Activated CD4-positive, alpha-beta memory T cell treated with anti-CD3 and anti-CD28 coated beads for 36 hours (primary cell): ENCODE measurements at regions of chr5 and their contacts with region 1.

Region 1: GRCh38 chr5:43631182-43631910 is 28.4 kb downstream of the NNT start:
- DNase-seq: peak; percentile 27
- H3K4me3 Mint-ChIP-seq: no peak overlapping the region
- H3K27ac Mint-ChIP-seq: no peak overlapping the region
- H3K4me1 Mint-ChIP-seq: peaks cover 5% of the 10 kb centered on the region
- H3K27me3 Mint-ChIP-seq: no peaks in the 10 kb centered on the region

Region 2: DNA sequence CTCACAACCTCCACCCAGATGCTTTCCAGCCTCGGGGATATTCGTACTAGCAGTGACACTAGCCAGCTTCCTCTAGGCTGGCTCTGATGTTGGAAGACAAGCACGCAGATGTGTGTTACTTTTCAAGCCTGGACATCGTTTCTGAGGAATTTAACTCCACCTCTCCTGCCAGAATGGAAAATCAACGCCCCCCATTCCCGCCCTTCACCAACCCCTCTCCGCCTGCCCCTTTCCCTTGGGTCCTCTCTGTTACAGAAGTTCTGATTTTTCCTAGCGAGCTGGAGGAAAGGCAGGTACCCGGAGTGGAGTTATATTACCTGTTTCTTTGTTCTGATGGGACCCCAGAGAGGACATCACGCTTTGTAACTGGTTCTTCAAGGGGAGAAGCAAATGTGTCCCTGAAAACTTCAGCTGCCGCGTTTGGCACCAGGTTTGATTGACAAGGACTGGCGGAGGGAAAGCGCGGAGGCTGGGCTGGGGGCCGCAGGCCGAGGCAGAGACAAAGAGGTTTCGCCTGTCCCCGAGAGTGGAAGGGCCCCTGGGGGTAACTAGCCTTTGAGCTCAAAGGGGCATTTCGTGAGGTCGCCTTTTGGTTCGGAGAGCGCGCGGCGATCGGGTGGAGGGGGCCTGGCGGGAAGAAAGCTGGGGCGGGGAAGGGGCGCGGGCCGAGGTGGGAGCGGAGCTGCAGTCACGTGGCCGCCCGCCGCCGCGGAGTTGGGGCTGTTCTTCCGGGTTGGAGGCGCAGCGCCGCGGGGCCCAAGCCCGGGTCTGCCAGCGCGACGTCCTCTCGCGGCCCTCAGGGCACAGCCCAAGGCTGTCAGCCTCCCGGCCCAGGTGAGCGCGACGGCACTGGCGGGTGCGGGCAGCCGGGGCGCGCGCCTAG is 28.6 kb before region 1 on chr5 and contains the start of gene NNT:
- CTCF ChIA-PET with region 1: interaction called, 16 read pairs
- POLR2A ChIA-PET with region 1: interaction called, 10 read pairs
- intact Hi-C with region 1: no loop called
- DNase-seq: peak; percentile 84
- H3K4me3 Mint-ChIP-seq: peak within 1 kb of the TSS; percentile 97
- H3K27ac Mint-ChIP-seq: peak within 1 kb of the TSS; percentile 93
- H3K4me1 Mint-ChIP-seq: peaks cover 35% of the 10 kb centered on the region
- H3K27me3 Mint-ChIP-seq: no peaks in the 10 kb centered on the region
- total RNA-seq, gene NNT: 96.6 to 99.9 TPM

Region 3: DNA sequence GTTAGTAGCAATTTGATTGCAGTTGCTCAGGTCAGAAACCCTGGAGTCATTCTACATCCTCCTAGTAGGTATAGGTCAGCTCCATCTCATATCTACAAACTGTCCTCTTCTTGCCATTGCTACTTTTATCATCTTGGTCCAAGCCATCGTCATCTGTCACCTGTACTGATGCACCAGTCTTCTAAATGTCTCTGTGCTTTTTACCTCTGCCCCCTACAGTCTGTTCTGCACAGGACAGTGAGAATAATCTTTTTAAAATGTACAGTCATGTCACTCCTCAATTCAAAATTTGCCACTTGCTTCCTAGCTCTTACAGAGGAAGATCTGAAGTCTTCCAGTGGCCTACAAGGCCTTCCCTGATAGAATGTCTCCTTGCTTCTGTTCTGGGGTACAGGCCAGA is 21.6 kb before region 1 on chr5:
- CTCF ChIA-PET with region 1: interaction called, 35 read pairs
- POLR2A ChIA-PET with region 1: no interaction called
- intact Hi-C with region 1: no loop called
- DNase-seq: no peak
- H3K4me3 Mint-ChIP-seq: no peak overlapping the region
- H3K27ac Mint-ChIP-seq: no peak overlapping the region
- H3K4me1 Mint-ChIP-seq: peaks cover 16% of the 10 kb centered on the region
- H3K27me3 Mint-ChIP-seq: no peaks in the 10 kb centered on the region

Region 4: GRCh38 chr5:43619380-43619779 is 12.0 kb before region 1 on chr5:
- CTCF ChIA-PET with region 1: interaction called, 23 read pairs
- POLR2A ChIA-PET with region 1: interaction called, 3 read pairs
- intact Hi-C with region 1: no loop called
- DNase-seq: no peak
- H3K4me3 Mint-ChIP-seq: no peak overlapping the region
- H3K27ac Mint-ChIP-seq: no peak overlapping the region
- H3K4me1 Mint-ChIP-seq: peaks cover 7% of the 10 kb centered on the region
- H3K27me3 Mint-ChIP-seq: no peaks in the 10 kb centered on the region

Region 5: DNA sequence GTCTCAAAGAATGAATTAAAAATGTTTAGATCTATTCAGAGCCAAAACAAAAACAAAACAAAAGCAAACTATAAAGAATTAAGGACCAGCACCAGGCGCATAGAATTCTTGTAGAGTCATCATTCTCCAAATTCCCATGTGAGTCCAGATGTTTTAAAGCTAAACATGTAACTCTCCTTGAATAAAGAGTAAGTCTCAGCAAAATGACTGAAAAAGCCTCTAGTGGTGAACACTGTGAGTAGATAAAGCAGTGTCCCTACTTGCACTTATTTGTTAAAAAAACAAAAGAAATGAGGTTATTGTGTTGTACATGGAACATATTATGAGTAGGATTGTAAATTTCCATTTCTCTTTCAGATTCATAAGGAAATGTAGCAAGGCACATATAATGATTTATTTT is 15.6 kb after region 1 on chr5:
- CTCF ChIA-PET with region 1: interaction called, 25 read pairs
- POLR2A ChIA-PET with region 1: no interaction called
- intact Hi-C with region 1: no loop called
- DNase-seq: no peak
- H3K4me3 Mint-ChIP-seq: no peak overlapping the region
- H3K27ac Mint-ChIP-seq: no peak overlapping the region
- H3K4me1 Mint-ChIP-seq: no peaks in the 10 kb centered on the region
- H3K27me3 Mint-ChIP-seq: no peaks in the 10 kb centered on the region

Region 6: DNA sequence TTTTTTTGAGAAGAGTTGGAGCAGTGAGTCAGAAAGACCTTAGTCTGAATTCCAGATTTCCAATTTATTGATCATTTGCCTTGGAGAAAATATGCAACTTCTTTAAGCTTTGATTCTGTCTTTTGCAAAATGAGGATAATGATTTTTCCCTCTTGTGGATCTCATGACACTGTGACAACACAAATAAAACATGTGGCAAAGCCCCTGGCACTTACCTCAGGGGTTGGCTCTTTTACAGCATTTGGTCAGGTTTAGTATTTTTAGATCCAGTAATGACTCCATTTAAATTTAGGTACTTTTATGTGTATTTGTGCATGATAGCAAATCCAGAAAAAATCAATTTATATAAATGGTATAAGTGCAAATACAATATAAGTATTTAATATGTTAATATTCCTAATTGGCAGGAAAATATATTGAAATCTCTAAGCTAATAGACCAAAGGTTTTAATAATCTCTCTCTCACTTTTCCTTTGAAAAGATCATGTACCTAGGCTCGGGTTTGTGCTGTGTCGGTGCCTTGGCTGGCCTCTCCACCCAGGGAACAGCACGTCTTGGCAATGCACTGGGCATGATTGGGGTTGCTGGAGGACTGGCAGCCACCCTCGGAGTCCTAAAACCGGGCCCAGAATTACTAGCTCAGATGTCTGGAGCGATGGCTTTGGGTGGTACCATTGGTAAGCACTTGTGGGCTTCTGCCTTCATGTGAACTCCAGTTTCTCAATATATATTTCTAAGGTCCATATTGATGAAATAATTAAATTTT is 21.4 kb after region 1 on chr5:
- CTCF ChIA-PET with region 1: interaction called, 10 read pairs
- POLR2A ChIA-PET with region 1: no interaction called
- intact Hi-C with region 1: no loop called
- DNase-seq: no peak
- H3K4me3 Mint-ChIP-seq: no peak overlapping the region
- H3K27ac Mint-ChIP-seq: no peak overlapping the region
- H3K4me1 Mint-ChIP-seq: no peaks in the 10 kb centered on the region
- H3K27me3 Mint-ChIP-seq: no peaks in the 10 kb centered on the region

Region 7: DNA sequence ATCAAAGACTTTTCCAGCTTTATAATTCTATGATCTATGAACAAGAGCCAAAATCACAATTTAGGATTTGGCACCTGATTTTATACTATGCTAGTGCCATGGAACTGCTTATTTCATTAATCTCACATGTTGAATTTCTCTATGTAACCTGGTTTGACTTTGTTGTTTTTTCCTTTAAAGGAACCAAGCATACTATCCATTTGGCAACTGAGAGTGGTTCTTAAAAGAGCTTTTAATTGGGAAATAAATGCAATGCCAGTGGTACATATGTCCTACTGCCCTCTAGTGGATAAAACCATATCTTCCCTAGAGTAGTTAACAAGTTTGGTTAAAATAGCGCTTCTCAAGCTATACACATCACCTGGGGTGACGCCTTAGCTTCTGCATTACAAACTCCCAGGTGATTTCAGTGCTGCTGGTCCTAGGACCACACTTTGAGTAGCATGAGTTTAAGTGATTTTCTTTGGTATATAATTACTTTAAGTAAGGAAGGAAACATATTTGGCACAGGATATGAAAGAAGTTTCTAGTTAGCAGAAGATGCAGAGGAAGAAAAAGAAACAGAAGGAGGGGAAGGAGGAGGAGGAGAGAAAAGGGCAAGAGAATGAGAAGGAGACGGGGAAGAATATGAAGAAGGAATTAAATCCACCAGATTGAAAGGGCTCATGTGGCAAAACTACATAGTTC is 701.1 kb after region 1 on chr5:
- CTCF ChIA-PET with region 1: no interaction called
- POLR2A ChIA-PET with region 1: no interaction called
- intact Hi-C with region 1: loop called (anchors 5 kb)
- DNase-seq: no peak
- H3K4me3 Mint-ChIP-seq: no peak overlapping the region
- H3K27ac Mint-ChIP-seq: no peak overlapping the region
- H3K4me1 Mint-ChIP-seq: no peaks in the 10 kb centered on the region
- H3K27me3 Mint-ChIP-seq: no peaks in the 10 kb centered on the region